ENCODE measurements at regions of chr2 and their contacts with region 1.

Region 1: GRCh38 chr2:148644883-148645538 is 460 bp downstream of the EPC2 start:
- DNase-seq: peak; percentile 92
- ATAC-seq: peak; percentile 70
- H3K4me3 ChIP-seq: peak overlapping the region; percentile 92
- H3K27ac ChIP-seq: peak overlapping the region; percentile 76
- H3K4me1 ChIP-seq: peaks cover 11% of the 10 kb centered on the region
- H3K27me3 ChIP-seq: no peaks in the 10 kb centered on the region
- CTCF ChIP-seq: peak; percentile 42; the same call in 1 of the 2 replicates

Region 2: DNA sequence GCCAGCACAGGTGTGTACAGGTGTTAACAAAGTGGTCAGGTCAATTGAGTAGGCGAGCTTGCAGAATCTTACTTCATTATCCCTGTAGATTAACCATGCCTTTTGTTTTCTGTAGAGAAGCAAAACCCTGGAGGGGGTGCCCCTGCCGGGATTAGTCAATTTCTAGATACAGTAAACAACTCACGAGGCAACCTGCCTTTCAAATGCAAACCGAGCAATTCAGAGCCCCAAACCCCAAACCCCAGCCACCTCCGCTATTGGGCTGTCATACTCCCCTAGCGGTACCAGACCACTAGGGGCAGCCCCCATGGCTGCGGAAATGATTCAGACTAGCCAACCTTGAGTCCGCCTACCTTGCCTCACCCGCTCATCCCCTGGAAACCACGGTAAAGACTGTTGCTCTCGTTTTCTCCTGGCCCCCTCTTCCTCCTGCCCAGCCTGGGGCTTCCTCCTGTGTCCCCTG is 168.6 kb after region 1 on chr2:
- CTCF ChIA-PET with region 1: interaction called, 5 read pairs
- POLR2A ChIA-PET with region 1: no interaction called
- intact Hi-C with region 1: loop called (anchors 2 kb)
- DNase-seq: no peak
- ATAC-seq: no peak
- H3K4me3 ChIP-seq: peak overlapping the region; percentile 60; the same call in 1 of the 2 replicates
- H3K27ac ChIP-seq: peak overlapping the region; percentile 75
- H3K4me1 ChIP-seq: peaks cover 48% of the 10 kb centered on the region
- H3K27me3 ChIP-seq: no peaks in the 10 kb centered on the region
- CTCF ChIP-seq: 0 out of 2 replicates have a peak, but pooled peaks have one; percentile 14

Region 3: GRCh38 chr2:148860037-148860436 is 215.0 kb after region 1 on chr2:
- CTCF ChIA-PET with region 1: interaction called, 17 read pairs
- POLR2A ChIA-PET with region 1: no interaction called
- intact Hi-C with region 1: no loop called
- DNase-seq: no peak
- ATAC-seq: no peak
- H3K4me3 ChIP-seq: no peak overlapping the region
- H3K27ac ChIP-seq: no peak overlapping the region
- H3K4me1 ChIP-seq: no peaks in the 10 kb centered on the region
- H3K27me3 ChIP-seq: peaks cover 6% of the 10 kb centered on the region; the same call in 1 of the 2 replicates
- CTCF ChIP-seq: no peak

Region 4: GRCh38 chr2:148874868-148875341 is 229.9 kb after region 1 on chr2 and contains the start of gene KIF5C:
- CTCF ChIA-PET with region 1: no interaction called
- POLR2A ChIA-PET with region 1: no interaction called
- intact Hi-C with region 1: loop called (anchors 10 kb)
- DNase-seq: peak; percentile 82
- ATAC-seq: peak; percentile 77
- H3K4me3 ChIP-seq: peak within 1 kb of the TSS; percentile 64
- H3K27ac ChIP-seq: no peak within 1 kb of the TSS
- H3K4me1 ChIP-seq: peaks cover 18% of the 10 kb centered on the region
- H3K27me3 ChIP-seq: peaks cover 28% of the 10 kb centered on the region
- CTCF ChIP-seq: no peak
- total RNA-seq, gene KIF5C: 4.0 and 7.3 TPM in 2 replicates

Region 5: GRCh38 chr2:148978026-148978685 is 333.1 kb after region 1 on chr2:
- CTCF ChIA-PET with region 1: interaction called, 18 read pairs
- POLR2A ChIA-PET with region 1: no interaction called
- intact Hi-C with region 1: no loop called
- DNase-seq: no peak
- ATAC-seq: no peak
- H3K4me3 ChIP-seq: no peak overlapping the region
- H3K27ac ChIP-seq: no peak overlapping the region
- H3K4me1 ChIP-seq: no peaks in the 10 kb centered on the region
- H3K27me3 ChIP-seq: no peaks in the 10 kb centered on the region
- CTCF ChIP-seq: peak; percentile 24; the same call in 1 of the 2 replicates

Region 6: DNA sequence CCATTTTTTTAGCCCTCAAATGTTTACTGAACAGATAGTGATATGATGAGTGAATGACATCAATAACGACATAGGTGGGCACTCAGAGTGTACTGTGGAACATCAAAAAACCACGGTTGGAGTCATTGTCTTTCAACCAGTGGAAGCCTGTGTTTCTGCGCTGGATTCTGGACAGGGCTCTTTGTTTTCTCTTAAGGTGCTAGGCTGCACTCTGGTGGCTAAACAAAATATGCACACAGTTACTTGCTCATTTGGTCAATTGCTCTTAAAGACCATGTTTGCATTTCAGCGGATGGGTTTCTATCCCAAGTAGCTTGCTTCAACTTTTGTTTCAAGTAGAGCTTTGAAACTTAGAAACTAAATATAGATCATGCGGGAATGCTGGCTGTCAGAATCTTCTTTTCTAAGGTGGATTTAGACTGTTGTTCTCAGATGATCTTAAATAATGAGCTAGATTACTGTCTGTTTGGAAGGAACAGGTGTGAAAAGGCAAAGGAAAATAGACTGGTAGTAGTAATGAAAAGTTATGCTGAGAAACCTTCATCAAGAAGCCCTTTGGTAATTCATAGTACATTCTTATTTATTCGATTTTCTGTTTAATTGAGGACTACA is 345.0 kb after region 1 on chr2:
- CTCF ChIA-PET with region 1: interaction called, 5 read pairs
- POLR2A ChIA-PET with region 1: no interaction called
- intact Hi-C with region 1: loop called (anchors 1 kb)
- DNase-seq: peak; percentile 87
- ATAC-seq: peak; percentile 92
- H3K4me3 ChIP-seq: no peak overlapping the region
- H3K27ac ChIP-seq: no peak overlapping the region
- H3K4me1 ChIP-seq: no peaks in the 10 kb centered on the region
- H3K27me3 ChIP-seq: no peaks in the 10 kb centered on the region
- CTCF ChIP-seq: peak; percentile 87

Region 7: GRCh38 chr2:150617351-150617978 is 1972.5 kb after region 1 on chr2:
- CTCF ChIA-PET with region 1: interaction called, 15 read pairs
- POLR2A ChIA-PET with region 1: no interaction called
- intact Hi-C with region 1: no loop called
- DNase-seq: no peak
- ATAC-seq: no peak
- H3K4me3 ChIP-seq: no peak overlapping the region
- H3K27ac ChIP-seq: no peak overlapping the region
- H3K4me1 ChIP-seq: peaks cover 47% of the 10 kb centered on the region
- H3K27me3 ChIP-seq: no peaks in the 10 kb centered on the region
- CTCF ChIP-seq: no peak